ENCODE measurements at regions of chr1 and their contacts with region 1.

Region 1: GRCh38 chr1:65067491-65068201 is 80.4 kb upstream of the AK4 start:
- DNase-seq: peak; percentile 84
- ATAC-seq: peak; percentile 68

Region 2: DNA sequence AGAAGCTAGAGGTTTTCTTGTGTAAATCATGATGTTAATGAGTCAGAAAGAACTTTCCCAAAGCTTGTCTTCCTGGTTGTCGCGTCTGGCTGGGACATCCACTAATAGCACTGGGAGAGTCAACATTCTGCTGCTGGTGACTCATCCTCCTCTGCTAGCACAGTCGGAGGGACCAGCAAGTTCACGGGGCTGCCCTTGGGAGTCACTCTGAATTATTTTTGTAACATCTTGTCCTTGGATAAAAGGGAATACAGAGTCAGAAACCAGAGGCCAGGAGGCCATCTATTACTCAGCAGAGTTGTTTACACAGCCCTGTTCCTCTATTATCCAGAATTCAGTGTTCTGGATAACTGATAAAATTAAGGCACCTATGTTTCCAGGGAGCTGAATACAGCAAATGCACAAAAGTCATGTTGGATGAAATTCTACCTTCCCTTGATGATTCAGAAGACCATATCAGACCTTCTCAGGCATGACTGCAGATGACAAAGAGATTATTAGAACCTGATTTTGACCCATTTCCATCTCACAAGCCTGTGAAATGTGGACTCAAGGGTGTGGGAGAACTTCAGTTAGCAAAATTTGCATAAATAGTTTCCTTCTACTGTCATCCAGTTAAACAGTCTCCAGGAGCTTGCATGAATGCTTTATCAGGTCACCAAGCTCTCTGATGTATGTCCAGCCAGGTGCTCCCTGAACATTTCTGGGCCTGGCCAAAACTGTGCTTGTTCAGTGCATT is 169.4 kb before region 1 on chr1:
- intact Hi-C with region 1: no loop called
- DNase-seq: peak; percentile 75
- ATAC-seq: peak; percentile 97

Region 3: GRCh38 chr1:64966158-64966971 is 101.3 kb before region 1 on chr1 and contains the start of gene JAK1:
- intact Hi-C with region 1: loop called (anchors 10 kb)
- DNase-seq: peak; percentile 93
- ATAC-seq: peak; percentile 93
- total RNA-seq, gene JAK1: 90.3 TPM

Region 4: DNA sequence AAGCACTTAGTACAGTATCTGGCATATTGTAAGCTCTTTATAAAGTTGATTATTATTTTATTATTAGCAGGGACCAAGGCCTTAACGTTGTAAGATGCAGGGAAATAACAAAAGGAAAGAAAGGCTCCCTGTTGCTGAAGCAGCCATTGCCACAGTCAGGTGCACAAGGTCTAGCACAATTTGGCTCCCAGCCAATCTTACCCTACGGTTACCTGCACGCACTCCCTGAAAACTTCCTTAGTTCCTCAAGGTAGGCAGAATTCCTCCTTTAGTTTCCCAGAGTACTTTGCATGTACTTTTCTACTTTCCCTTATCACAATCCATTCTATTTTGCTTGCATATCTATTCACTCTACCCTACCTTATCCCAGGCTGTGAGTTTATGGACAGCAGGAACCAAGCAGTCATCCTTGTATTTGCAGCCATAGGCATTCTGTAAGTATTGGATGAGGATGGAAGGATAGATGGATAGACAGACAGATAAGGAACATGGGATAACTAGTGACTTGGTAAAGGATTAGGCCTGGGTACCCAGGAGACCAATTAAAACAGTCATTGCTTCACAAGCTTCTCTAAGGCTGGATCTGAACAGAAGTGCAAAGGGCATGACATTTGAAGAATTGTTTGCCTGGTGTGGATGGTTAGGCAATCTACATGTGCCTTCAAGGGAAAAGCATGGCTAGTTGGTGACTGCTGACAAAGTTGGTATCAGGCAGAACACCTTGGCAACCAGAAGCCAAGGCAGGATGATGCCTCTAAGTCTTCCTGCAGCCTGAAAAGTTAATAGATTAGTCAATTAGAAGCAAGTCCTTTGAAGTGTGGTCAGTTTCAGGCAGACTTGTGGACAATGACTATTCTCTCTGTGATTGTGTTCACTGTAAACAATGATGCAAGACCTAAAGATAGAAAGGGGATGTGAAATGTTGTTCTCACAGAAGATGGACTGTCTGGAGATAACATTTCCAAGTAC is 80.5 kb before region 1 on chr1:
- intact Hi-C with region 1: no loop called
- DNase-seq: no peak
- ATAC-seq: peak; percentile 88

Region 5: GRCh38 chr1:65209005-65209885 is 141.6 kb after region 1 on chr1:
- intact Hi-C with region 1: loop called (anchors 5 kb)
- DNase-seq: no peak
- ATAC-seq: peak; percentile 80

Region 6: DNA sequence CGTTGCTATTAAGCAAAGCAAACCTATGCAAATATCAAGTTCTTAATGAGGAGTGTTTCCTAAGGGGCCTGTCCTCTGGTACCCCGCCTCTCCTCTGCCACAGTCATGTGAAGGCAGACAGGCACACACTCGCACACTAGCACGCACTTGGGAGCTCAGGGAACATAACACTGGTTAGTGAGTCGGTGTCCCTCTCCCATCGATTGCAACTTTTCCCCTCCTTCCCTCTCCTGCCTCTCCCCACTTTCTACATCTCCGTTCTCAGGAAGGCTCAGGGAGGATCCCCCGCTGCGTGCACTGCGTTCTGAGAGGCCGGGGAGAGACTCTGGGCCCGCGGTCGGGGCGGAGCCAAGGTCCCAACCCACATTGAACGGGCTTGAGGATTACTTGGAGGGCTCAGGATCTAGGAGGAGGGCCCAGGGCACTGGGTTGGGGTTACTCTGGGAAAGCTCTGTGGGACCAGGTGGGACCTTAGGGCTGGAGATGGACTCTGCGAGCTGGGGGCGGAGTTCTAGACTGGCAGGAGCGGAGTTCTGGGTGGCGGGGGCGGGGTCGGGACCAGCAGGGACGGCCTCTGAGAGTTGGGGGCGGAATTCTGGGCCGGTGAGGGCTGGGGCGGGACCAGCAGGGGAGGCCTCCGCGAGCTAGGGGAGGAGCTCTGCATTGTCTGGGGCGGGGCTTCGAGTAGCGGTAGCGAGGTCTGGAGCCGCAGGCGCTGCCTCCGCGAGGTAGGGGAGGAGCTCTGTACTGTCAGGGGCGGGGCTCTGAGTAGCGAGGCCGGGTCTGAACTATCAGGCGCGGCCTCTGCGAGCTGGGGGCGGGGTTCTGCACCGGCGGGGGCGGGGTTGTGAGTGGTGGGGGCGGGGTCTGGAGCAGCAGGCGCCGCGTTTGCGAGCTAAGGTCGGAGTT is 352.3 kb after region 1 on chr1:
- intact Hi-C with region 1: no loop called
- DNase-seq: peak; percentile 99
- ATAC-seq: peak; percentile 97